Endothelial cell of umbilical vein (primary cell): ENCODE measurements at regions of chr20 and their contacts with region 1.

Region 1: GRCh38 chr20:23668477-23668951 is 20.3 kb downstream of the CST4 start:
- DNase-seq: peak; percentile 67
- H3K4me3 ChIP-seq: no peak overlapping the region
- H3K27ac ChIP-seq: no peak overlapping the region
- H3K4me1 ChIP-seq: peaks cover 7% of the 10 kb centered on the region
- H3K27me3 ChIP-seq: no peaks in the 10 kb centered on the region
- CTCF ChIP-seq: peak; percentile 81 to 82
- POLR2A ChIP-seq: no peak

Region 2: GRCh38 chr20:23441850-23442313 is 226.6 kb before region 1 on chr20:
- CTCF ChIA-PET with region 1: interaction called, 8 read pairs
- POLR2A ChIA-PET with region 1: no interaction called
- dilution Hi-C with region 1: no loop called
- intact Hi-C with region 1: loop called (anchors 5 kb)
- DNase-seq: peak; percentile 77
- H3K4me3 ChIP-seq: no peak overlapping the region
- H3K27ac ChIP-seq: no peak overlapping the region
- H3K4me1 ChIP-seq: no peaks in the 10 kb centered on the region
- H3K27me3 ChIP-seq: no peaks in the 10 kb centered on the region
- CTCF ChIP-seq: peak; percentile 80 to 90
- POLR2A ChIP-seq: no peak

Region 3: DNA sequence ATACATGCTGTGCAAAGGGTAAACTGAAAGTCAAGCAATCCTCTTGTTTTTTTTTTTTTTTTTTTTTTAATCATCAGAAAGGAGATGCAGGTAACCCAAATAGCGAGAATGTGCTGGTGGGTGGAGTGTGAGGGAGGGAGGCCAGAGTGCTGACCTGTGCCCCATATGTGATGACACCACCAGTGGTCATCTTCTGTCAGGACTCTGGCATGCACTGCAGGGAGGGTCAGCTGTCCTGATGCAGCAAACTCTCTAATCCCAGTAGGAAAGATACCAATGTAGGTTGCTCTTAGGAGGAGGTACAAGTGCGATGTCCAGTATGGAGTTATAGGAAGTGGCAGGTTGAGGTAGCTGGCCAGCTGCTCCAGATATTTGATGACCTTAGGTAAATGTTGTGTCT is 23.1 kb after region 1 on chr20:
- CTCF ChIA-PET with region 1: interaction called, 9 read pairs
- POLR2A ChIA-PET with region 1: no interaction called
- dilution Hi-C with region 1: no loop called
- intact Hi-C with region 1: loop called (anchors 2 kb)
- DNase-seq: no peak
- H3K4me3 ChIP-seq: no peak overlapping the region
- H3K27ac ChIP-seq: no peak overlapping the region
- H3K4me1 ChIP-seq: peaks cover 38% of the 10 kb centered on the region
- H3K27me3 ChIP-seq: no peaks in the 10 kb centered on the region
- CTCF ChIP-seq: no peak
- POLR2A ChIP-seq: no peak

Region 4: GRCh38 chr20:23727016-23727415 is 58.5 kb after region 1 on chr20:
- CTCF ChIA-PET with region 1: interaction called, 10 read pairs
- POLR2A ChIA-PET with region 1: no interaction called
- dilution Hi-C with region 1: no loop called
- intact Hi-C with region 1: loop called (anchors 1 kb)
- DNase-seq: no peak
- H3K4me3 ChIP-seq: no peak overlapping the region
- H3K27ac ChIP-seq: no peak overlapping the region
- H3K4me1 ChIP-seq: no peaks in the 10 kb centered on the region
- H3K27me3 ChIP-seq: no peaks in the 10 kb centered on the region
- CTCF ChIP-seq: no peak
- POLR2A ChIP-seq: no peak

Region 5: DNA sequence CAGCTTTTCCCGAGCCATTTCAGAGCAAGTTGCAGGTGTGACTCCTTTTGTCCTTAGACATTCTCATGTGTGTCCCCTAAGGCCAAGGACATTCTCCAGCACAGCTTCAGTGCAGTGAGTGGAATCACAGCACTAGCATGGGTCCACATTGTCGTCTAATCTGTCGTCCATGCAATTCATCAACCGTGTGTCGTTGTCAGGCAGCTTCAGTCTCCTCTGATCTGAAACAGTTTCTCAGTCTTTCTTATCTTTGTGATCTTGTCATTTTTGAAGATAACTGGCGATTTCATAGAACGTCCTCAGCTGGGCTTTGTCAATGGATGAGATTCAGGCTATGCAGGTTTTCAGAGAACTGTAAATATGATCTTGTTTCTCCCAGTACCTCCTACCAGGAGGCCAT is 126.3 kb after region 1 on chr20:
- CTCF ChIA-PET with region 1: interaction called, 3 read pairs
- POLR2A ChIA-PET with region 1: no interaction called
- dilution Hi-C with region 1: no loop called
- intact Hi-C with region 1: loop called (anchors 5 kb)
- DNase-seq: no peak
- H3K4me3 ChIP-seq: no peak overlapping the region
- H3K27ac ChIP-seq: no peak overlapping the region
- H3K4me1 ChIP-seq: no peaks in the 10 kb centered on the region
- H3K27me3 ChIP-seq: peaks cover 3 to 5% of the 10 kb centered on the region in 2 experiments
- CTCF ChIP-seq: no peak
- POLR2A ChIP-seq: no peak

Region 6: DNA sequence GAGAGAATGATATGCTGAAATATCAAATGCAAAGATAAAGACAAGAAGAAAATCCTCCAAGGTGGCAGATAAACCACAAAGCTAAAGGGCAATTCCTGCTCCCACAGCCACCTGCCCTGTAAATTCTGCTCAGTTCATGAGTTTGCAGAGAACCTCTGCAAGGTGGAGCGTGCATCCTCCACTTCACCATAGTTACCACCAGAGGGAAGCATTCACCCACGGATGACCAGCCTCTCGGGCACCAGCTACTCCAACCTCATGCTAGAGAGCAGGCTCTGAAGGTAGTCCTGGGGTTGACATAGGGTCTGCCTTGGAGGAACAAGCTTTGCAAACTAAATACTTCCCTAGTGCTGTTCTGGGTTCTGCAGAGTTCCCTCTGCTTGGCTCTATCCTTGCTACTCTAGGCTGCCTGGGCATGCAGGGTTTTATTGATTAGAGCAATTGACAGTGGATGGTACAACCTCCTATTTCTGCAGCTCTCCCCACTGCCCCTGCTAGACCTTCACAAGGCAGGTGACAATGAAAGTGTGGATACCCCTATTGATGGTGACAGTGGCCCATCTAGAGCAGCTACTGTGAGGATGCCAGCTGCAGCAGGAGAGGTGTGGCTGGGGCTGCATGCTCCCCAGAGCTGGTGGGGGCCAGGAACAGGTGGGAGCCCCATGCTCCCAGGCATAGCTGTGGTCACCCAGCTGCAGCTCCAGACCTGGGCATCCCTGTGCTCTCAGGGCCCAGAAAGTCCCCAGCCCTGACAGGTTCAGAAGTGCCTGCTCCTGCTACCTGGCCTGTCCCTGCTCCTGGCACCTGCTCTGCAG is 269.0 kb after region 1 on chr20:
- CTCF ChIA-PET with region 1: interaction called, 8 read pairs
- POLR2A ChIA-PET with region 1: no interaction called
- dilution Hi-C with region 1: no loop called
- intact Hi-C with region 1: loop called (anchors 2 kb)
- DNase-seq: peak; percentile 60
- H3K4me3 ChIP-seq: no peak overlapping the region
- H3K27ac ChIP-seq: no peak overlapping the region
- H3K4me1 ChIP-seq: no peaks in the 10 kb centered on the region
- H3K27me3 ChIP-seq: no peaks in the 10 kb centered on the region
- CTCF ChIP-seq: peak; percentile 54 to 73
- POLR2A ChIP-seq: no peak

Region 7: DNA sequence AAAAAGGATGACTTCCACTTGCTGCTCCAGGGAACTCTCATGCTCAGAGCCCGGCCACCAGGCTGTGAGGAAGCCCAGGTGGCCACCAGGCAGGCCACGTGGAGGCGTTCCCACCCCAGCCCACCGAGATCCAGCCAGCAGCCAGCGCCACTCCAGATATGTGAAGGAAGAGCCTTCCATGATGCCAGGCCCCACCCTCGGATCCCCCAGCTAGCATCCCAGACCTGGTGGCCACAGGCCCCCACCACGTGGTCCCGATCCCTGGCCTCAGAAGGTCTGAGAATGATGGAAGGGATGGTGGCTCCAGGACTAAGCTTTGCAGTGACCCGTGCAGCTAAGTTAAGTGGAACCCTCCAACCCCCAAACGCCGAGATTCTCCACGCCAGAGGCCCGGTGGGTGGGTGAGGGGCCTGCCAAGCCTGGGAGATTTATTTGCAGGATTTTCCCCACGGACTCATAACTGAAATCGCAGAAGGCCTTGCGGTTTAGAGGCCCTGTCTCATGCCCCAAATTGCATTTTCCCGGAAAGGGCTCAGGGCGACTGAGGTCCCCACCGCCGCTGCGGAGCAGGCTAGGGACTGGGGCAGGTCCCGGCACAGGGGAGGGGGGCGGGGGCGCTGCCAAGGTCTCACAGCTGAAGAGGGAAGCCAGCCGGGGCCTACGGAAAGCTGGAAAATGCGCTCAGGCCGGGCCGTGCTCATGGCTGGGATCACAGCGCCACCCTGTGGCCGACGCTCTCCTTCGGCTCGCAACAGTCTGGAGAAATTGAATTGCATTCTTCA is 1249.5 kb after region 1 on chr20:
- CTCF ChIA-PET with region 1: interaction called, 8 read pairs
- POLR2A ChIA-PET with region 1: no interaction called
- dilution Hi-C with region 1: no loop called
- intact Hi-C with region 1: loop called (anchors 1 kb)
- DNase-seq: peak; percentile 55
- H3K4me3 ChIP-seq: no peak overlapping the region
- H3K27ac ChIP-seq: no peak overlapping the region
- H3K4me1 ChIP-seq: no peaks in the 10 kb centered on the region
- H3K27me3 ChIP-seq: no peaks in the 10 kb centered on the region
- CTCF ChIP-seq: peak; percentile 80 to 88
- POLR2A ChIP-seq: no peak